ENCODE measurements at regions of chr12 and their contacts with region 1.

Region 1: DNA sequence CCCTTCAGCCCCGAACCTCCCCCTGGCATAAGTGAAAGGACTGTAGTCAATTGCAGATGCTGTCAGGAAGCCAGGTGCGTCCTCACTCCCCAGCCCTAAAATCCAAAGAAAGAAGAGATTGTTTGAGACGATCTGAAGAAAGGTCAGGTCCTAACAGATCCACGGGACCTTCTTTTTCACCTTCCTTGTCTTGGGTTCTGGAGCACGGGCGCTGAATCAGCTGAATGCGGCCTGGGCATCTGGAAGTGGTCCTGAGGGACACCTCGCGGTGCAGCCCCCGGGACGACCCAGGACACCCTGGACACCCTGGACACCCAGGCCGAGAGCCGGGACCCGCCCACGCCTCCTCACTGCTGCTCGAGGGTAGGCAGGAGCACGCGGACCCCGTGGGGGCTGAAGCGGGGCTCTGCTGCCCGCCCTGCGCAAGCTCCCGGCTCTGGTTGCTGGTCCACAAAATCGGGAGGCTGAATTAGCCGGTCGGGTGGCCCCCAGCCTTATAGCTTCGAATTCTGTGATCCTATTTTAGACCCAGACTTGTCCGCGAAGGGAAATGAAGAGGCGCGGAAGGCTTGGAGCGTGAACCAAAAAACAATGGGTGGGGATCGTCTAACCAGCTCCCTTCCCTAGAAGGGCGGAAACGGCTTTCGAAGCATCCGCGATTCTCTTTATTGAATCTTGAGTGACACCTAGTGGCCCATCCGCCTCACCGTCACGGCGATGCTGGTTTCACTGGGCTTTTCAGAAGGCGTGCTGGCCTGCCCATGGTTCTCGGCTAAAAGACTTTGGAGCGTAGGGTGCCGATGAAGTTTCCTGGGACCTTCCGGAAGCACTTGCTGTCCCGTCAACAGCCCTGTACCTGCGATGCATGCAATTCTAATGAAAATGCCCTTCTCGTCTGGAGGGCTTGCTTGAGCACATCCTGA is 46.4 kb upstream of the PLXNC1 start:
- DNase-seq: peak; percentile 61 to 86 (median 82)
- ATAC-seq: peak; percentile 91
- H3K4me3 ChIP-seq: peak overlapping the region; percentile 77
- H3K4me3 Mint-ChIP-seq: peak overlapping the region; percentile 88 to 95 (median 90)
- H3K27ac ChIP-seq: peak overlapping the region; percentile 69
- H3K27ac Mint-ChIP-seq: peak overlapping the region; percentile 30 to 86 (median 76)
- H3K4me1 ChIP-seq: peaks cover 0 to 13% of the 10 kb centered on the region in 2 donors
- H3K4me1 Mint-ChIP-seq: peaks cover 11 to 30% (median 25%) of the 10 kb centered on the region in 7 donors
- H3K27me3 ChIP-seq: no peaks in the 10 kb centered on the region
- H3K27me3 Mint-ChIP-seq: peaks cover 0 to 19% (median 10%) of the 10 kb centered on the region in 5 donors

Region 2: GRCh38 chr12:93025145-93025805 is 1076.7 kb before region 1 on chr12:
- CTCF ChIA-PET with region 1: no interaction called
- POLR2A ChIA-PET with region 1: no interaction called
- intact Hi-C with region 1: loop called in 1 of 2 experiments (anchors 1 kb)
- DNase-seq: peak in 3 of 9 donors; percentile 2 to 15 (median 4)
- ATAC-seq: peak; percentile 56
- H3K4me3 ChIP-seq: no peak overlapping the region
- H3K4me3 Mint-ChIP-seq: no peak overlapping the region
- H3K27ac ChIP-seq: no peak overlapping the region
- H3K27ac Mint-ChIP-seq: no peak overlapping the region
- H3K4me1 ChIP-seq: no peaks in the 10 kb centered on the region
- H3K4me1 Mint-ChIP-seq: no peaks in the 10 kb centered on the region
- H3K27me3 ChIP-seq: no peaks in the 10 kb centered on the region
- H3K27me3 Mint-ChIP-seq: peaks cover 0 to 3% (median 0%) of the 10 kb centered on the region in 5 donors

Region 3: DNA sequence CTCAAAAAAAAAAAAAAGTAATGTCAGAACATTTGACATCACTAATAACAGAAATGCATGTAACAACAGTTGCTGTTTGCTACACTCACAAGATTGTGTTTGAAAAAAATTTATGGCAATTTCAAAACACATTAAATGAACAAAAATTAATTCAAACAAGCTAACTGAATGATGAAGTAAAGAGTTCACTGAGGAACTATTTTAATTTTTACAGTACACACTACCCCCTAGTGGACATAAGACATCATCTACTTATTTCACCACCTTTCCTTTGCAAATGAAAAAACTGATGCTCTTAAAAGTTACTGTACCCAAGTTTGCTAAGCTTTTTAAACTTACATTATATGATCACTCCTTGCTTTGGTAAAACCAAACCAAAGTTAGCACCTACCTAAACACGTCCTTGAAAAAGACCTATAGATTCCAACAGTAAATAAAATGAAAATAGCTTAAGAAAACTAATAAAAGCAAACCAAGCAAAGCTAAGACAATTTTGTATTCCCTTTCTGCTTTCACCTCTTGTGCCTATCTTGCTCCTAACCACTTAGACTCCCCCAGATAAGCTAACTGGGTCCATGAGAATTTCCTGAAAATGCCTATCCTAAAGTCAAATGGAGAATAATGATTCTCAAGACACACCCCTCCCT is 682.5 kb before region 1 on chr12:
- CTCF ChIA-PET with region 1: interaction called, 6 read pairs
- POLR2A ChIA-PET with region 1: no interaction called
- intact Hi-C with region 1: loop called (anchors 1 to 5 kb)
- DNase-seq: peak in 6 of 9 donors; percentile 36 to 68 (median 54)
- ATAC-seq: peak; percentile 88
- H3K4me3 ChIP-seq: no peak overlapping the region
- H3K4me3 Mint-ChIP-seq: peak overlapping the region in 2 of 10 donors; percentile 10 to 34
- H3K27ac ChIP-seq: no peak overlapping the region
- H3K27ac Mint-ChIP-seq: peak overlapping the region in 8 of 9 donors; percentile 19 to 92 (median 54)
- H3K4me1 ChIP-seq: peaks cover 0 to 16% of the 10 kb centered on the region in 2 donors
- H3K4me1 Mint-ChIP-seq: peaks cover 45 to 95% (median 88%) of the 10 kb centered on the region in 7 donors
- H3K27me3 ChIP-seq: no peaks in the 10 kb centered on the region
- H3K27me3 Mint-ChIP-seq: no peaks in the 10 kb centered on the region

Region 4: GRCh38 chr12:93742110-93742934 is 359.7 kb before region 1 on chr12:
- CTCF ChIA-PET with region 1: interaction called, 4 read pairs
- POLR2A ChIA-PET with region 1: interaction called, 3 read pairs
- intact Hi-C with region 1: loop called in 1 of 2 experiments (anchors 1 kb)
- DNase-seq: peak; percentile 25 to 63 (median 40)
- ATAC-seq: peak; percentile 96
- H3K4me3 ChIP-seq: peak overlapping the region; percentile 83
- H3K4me3 Mint-ChIP-seq: peak overlapping the region; percentile 83 to 97 (median 93)
- H3K27ac ChIP-seq: peak overlapping the region; percentile 74
- H3K27ac Mint-ChIP-seq: peak overlapping the region; percentile 29 to 98 (median 92)
- H3K4me1 ChIP-seq: peaks cover 0 to 13% of the 10 kb centered on the region in 2 donors
- H3K4me1 Mint-ChIP-seq: peaks cover 27 to 55% (median 41%) of the 10 kb centered on the region in 7 donors
- H3K27me3 ChIP-seq: no peaks in the 10 kb centered on the region
- H3K27me3 Mint-ChIP-seq: peaks cover 0 to 2% (median 0%) of the 10 kb centered on the region in 5 donors

Region 5: GRCh38 chr12:93894391-93895088 is 207.5 kb before region 1 on chr12:
- CTCF ChIA-PET with region 1: interaction called, 3 read pairs
- POLR2A ChIA-PET with region 1: no interaction called
- intact Hi-C with region 1: loop called in 1 of 2 experiments (anchors 5 kb)
- DNase-seq: no peak
- ATAC-seq: peak; percentile 31
- H3K4me3 ChIP-seq: no peak overlapping the region
- H3K4me3 Mint-ChIP-seq: no peak overlapping the region
- H3K27ac ChIP-seq: no peak overlapping the region
- H3K27ac Mint-ChIP-seq: peak overlapping the region in 3 of 9 donors; percentile 3 to 58 (median 52)
- H3K4me1 ChIP-seq: peaks cover 0 to 13% of the 10 kb centered on the region in 2 donors
- H3K4me1 Mint-ChIP-seq: peaks cover 11 to 60% (median 33%) of the 10 kb centered on the region in 7 donors
- H3K27me3 ChIP-seq: no peaks in the 10 kb centered on the region
- H3K27me3 Mint-ChIP-seq: no peaks in the 10 kb centered on the region

Region 6: DNA sequence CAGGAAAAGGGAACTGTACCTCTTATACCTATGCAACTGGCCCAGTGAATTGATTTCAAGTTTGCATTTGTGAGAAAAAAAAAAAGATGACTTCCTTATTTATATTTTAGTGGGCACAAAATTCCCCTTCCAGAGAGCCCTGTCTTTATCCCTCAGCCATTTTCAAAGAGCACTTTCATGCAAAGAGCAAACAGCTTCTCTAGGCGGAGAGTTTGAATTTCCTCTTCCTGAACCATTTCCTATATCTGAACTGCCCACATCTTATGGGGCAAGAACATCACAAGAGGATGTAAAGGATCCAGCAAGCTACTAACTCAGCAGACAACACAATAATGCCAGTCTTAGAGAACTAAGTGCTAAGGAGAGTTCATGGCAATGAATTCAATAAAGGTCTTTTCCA is 24.1 kb after region 1 on chr12:
- CTCF ChIA-PET with region 1: interaction called, 14 read pairs
- POLR2A ChIA-PET with region 1: interaction called, 3 read pairs
- intact Hi-C with region 1: no loop called
- DNase-seq: no peak
- ATAC-seq: peak; percentile 58
- H3K4me3 ChIP-seq: no peak overlapping the region
- H3K4me3 Mint-ChIP-seq: peak overlapping the region; percentile 0 to 92 (median 56)
- H3K27ac ChIP-seq: no peak overlapping the region
- H3K27ac Mint-ChIP-seq: peak overlapping the region; percentile 53 to 90 (median 70)
- H3K4me1 ChIP-seq: peaks cover 16 to 50% of the 10 kb centered on the region in 2 donors
- H3K4me1 Mint-ChIP-seq: peaks cover 46 to 62% (median 59%) of the 10 kb centered on the region in 7 donors
- H3K27me3 ChIP-seq: no peaks in the 10 kb centered on the region
- H3K27me3 Mint-ChIP-seq: peaks cover 0 to 10% (median 0%) of the 10 kb centered on the region in 5 donors

Region 7: DNA sequence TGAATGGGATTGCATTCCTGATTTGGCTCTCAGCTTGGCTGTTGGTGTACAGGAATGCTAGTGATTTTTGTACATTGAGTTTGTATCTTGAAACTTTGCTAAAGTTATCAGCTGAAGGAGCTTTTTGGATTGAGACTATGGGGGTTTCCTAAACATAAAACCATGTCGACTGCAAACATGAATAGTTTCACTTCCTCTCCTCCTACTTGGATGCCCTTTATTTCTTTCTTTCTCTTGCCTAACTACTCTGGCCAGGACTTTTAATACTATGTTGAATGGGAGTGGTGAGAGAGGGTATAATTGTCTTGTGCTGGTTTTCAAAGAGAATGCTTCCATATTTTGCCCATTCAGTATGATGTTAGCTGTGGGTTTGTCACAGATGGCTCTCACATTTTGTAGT is 216.2 kb after region 1 on chr12:
- CTCF ChIA-PET with region 1: no interaction called
- POLR2A ChIA-PET with region 1: no interaction called
- intact Hi-C with region 1: no loop called
- DNase-seq: no peak
- ATAC-seq: no peak
- H3K4me3 ChIP-seq: no peak overlapping the region
- H3K4me3 Mint-ChIP-seq: no peak overlapping the region
- H3K27ac ChIP-seq: no peak overlapping the region
- H3K27ac Mint-ChIP-seq: no peak overlapping the region
- H3K4me1 ChIP-seq: no peaks in the 10 kb centered on the region
- H3K4me1 Mint-ChIP-seq: peaks cover 0 to 6% (median 0%) of the 10 kb centered on the region in 7 donors
- H3K27me3 ChIP-seq: no peaks in the 10 kb centered on the region
- H3K27me3 Mint-ChIP-seq: no peaks in the 10 kb centered on the region

Measured in naive thymus-derived CD4-positive, alpha-beta T cell (primary cell).